Activated CD4-positive, alpha-beta T cell treated with anti-CD3 and anti-CD28 coated beads for 36 hours (primary cell): ENCODE measurements at regions of chr17 and their contacts with region 1.

Region 1: DNA sequence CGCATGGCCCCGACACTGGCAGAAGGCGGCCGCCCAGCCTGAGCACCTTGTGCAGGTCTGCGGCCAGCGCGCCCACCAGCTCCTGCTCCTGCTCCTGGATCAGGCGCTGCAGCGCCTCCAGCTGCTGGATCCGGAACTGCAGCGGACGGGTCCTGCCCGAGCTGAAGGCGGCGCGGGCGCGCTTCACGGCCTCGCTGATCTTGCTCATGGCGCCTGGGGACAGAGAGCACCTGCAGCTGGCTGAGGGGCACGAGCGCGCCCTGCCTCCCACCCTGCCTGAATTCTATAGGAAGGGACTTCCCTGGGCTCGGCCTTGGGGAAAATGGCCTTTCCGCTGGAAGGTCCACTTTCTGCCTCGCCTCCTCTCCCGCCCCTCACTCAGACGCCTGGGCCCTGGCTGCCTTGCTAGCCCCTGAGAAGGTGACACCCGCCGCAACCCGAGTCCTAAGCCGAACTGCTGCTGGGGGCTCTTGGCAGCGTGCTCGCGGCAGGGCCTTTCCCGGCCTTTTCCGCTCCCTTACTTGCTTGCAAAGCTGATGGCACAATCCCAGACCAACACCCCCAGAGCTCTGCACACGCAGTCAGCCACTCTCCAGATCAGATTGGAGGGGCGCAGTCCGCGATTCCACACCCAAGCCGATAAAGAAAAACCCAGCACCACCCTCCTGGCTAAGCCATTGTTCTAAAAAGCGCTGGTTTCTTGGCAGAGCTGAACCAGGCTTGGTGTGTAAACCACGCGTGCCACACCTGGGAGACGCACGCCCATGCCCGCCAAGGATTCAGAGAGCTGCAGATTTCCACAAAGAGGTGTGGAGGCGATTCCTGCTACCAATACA is 3.0 kb downstream of the ALDH3A1 start:
- DNase-seq: peak; percentile 95
- ATAC-seq: peak; percentile 95
- H3K4me3 Mint-ChIP-seq: peak overlapping the region; percentile 62
- H3K27ac Mint-ChIP-seq: no peak overlapping the region
- H3K4me1 Mint-ChIP-seq: peaks cover 10% of the 10 kb centered on the region
- H3K27me3 Mint-ChIP-seq: no peaks in the 10 kb centered on the region

Region 2: DNA sequence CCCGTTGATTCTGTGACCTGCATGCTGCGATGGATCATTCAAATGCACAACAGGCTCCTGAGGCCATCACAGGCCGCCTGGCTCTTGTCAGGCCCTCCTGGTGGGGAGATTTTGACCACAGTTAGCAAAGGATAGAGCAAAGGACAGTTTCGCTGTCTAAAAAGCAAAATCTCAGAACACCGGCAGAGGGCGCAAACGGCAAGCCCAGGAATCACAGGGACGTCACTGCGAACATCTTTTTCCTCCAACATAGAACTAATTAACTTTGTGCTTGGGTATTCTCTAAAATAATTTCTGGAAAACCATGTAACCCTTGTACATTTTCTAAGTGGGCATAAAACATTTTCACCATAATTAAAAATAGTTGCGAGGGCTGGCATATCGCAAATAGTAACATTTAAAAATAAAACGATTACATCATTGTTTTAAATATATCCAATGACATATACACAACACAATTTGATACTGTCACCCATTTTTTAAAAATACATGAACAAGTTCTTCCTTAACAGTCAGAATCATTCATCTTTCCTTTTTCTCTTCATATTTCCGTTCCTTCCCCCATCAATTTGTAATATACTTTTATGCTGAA is 231.1 kb before region 1 on chr17:
- CTCF ChIA-PET with region 1: interaction called, 11 read pairs
- POLR2A ChIA-PET with region 1: no interaction called
- intact Hi-C with region 1: no loop called
- DNase-seq: peak; percentile 82
- ATAC-seq: peak; percentile 69
- H3K4me3 Mint-ChIP-seq: no peak overlapping the region
- H3K27ac Mint-ChIP-seq: no peak overlapping the region
- H3K4me1 Mint-ChIP-seq: no peaks in the 10 kb centered on the region
- H3K27me3 Mint-ChIP-seq: peaks cover 3% of the 10 kb centered on the region

Region 3: GRCh38 chr17:19578545-19578944 is 166.6 kb before region 1 on chr17:
- CTCF ChIA-PET with region 1: no interaction called
- POLR2A ChIA-PET with region 1: no interaction called
- intact Hi-C with region 1: no loop called
- DNase-seq: no peak
- ATAC-seq: no peak
- H3K4me3 Mint-ChIP-seq: no peak overlapping the region
- H3K27ac Mint-ChIP-seq: no peak overlapping the region
- H3K4me1 Mint-ChIP-seq: peaks cover 2% of the 10 kb centered on the region
- H3K27me3 Mint-ChIP-seq: peaks cover 18% of the 10 kb centered on the region

Region 4: GRCh38 chr17:19648475-19649406 is 96.4 kb before region 1 on chr17 and contains the start of gene ALDH3A2:
- CTCF ChIA-PET with region 1: interaction called, 26 read pairs
- POLR2A ChIA-PET with region 1: no interaction called
- intact Hi-C with region 1: loop called (anchors 5 kb)
- DNase-seq: peak; percentile 97
- ATAC-seq: peak; percentile 94
- H3K4me3 Mint-ChIP-seq: peak within 1 kb of the TSS; percentile 79
- H3K27ac Mint-ChIP-seq: peak within 1 kb of the TSS; percentile 87
- H3K4me1 Mint-ChIP-seq: peaks cover 38% of the 10 kb centered on the region
- H3K27me3 Mint-ChIP-seq: peaks cover 1% of the 10 kb centered on the region
- total RNA-seq, gene ALDH3A2: 18.5 to 23.9 TPM

Region 5: DNA sequence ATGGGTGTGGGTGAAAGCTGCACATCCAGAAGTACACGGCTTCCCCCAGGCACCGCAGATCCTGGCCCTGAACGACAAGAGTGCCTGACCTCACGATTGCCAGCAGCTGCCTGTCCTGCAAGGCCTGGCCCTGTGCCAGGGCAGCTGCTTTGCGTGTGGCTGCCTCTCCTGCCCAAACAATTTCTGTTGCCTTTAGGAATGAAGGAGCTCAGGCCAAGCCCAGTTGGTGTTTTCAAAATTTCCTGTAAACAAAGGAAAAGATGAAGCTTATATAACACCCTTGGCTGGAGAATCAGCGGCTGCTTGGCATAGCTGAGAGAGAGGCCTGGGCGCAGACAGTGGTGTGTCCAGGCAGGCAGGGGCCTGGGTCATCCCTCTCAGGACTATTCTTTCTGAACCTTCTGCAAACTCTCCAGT is 17.1 kb before region 1 on chr17:
- CTCF ChIA-PET with region 1: interaction called, 16 read pairs
- POLR2A ChIA-PET with region 1: no interaction called
- intact Hi-C with region 1: no loop called
- DNase-seq: no peak
- ATAC-seq: no peak
- H3K4me3 Mint-ChIP-seq: no peak overlapping the region
- H3K27ac Mint-ChIP-seq: no peak overlapping the region
- H3K4me1 Mint-ChIP-seq: peaks cover 19% of the 10 kb centered on the region
- H3K27me3 Mint-ChIP-seq: no peaks in the 10 kb centered on the region

Region 6: GRCh38 chr17:19733953-19734526 is 11.1 kb before region 1 on chr17:
- CTCF ChIA-PET with region 1: interaction called, 16 read pairs
- POLR2A ChIA-PET with region 1: no interaction called
- intact Hi-C with region 1: no loop called
- DNase-seq: no peak
- ATAC-seq: no peak
- H3K4me3 Mint-ChIP-seq: no peak overlapping the region
- H3K27ac Mint-ChIP-seq: no peak overlapping the region
- H3K4me1 Mint-ChIP-seq: no peaks in the 10 kb centered on the region
- H3K27me3 Mint-ChIP-seq: no peaks in the 10 kb centered on the region

Region 7: DNA sequence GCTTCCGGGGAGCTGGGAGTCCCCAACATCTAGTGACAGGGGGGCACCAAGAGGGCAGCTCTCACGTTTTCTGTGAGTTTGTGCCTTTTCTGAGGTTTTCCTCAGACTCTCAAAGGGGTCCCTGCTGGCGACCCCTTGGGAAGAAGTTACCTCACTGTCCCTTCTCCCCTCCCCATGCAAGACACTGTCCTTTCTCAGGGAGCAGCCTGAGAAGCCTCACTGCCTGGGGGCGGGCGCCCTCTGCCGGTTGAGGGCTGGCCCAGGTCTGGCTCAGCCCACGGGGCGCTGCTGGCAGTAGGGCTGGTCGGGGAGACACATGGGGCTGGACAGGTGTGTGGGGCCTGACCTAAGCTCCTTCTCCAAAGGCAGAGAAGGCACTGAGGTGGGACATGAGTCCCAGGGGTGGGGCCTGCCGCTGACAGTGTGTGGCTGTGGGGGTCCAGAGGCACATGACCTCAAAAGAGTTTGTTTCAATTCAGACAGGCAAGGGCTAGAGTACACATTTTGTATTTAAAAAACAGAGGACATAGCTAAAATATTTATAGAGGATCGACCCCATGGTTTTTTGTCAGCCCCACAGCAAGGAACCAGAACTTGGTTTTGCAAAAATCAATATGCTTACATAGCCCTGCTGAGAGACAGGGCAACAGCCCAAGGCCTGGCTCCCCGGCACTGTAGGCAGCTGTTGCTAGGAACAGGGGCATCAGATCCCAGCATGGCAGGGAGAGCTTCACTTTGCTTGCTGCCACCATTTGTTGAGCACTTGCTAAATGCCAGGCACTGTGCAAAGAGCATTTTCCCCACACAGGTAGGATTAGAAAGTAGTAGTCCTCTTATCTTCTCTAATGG is 21.5 kb after region 1 on chr17:
- CTCF ChIA-PET with region 1: interaction called, 37 read pairs
- POLR2A ChIA-PET with region 1: no interaction called
- intact Hi-C with region 1: no loop called
- DNase-seq: peak; percentile 89
- ATAC-seq: peak; percentile 80
- H3K4me3 Mint-ChIP-seq: no peak overlapping the region
- H3K27ac Mint-ChIP-seq: peak overlapping the region; percentile 72
- H3K4me1 Mint-ChIP-seq: peaks cover 46% of the 10 kb centered on the region
- H3K27me3 Mint-ChIP-seq: no peaks in the 10 kb centered on the region

Region 8: GRCh38 chr17:19805006-19805405 is 59.9 kb after region 1 on chr17:
- CTCF ChIA-PET with region 1: no interaction called
- POLR2A ChIA-PET with region 1: no interaction called
- intact Hi-C with region 1: loop called in 1 of 2 experiments (anchors 10 kb)
- DNase-seq: no peak
- ATAC-seq: no peak
- H3K4me3 Mint-ChIP-seq: no peak overlapping the region
- H3K27ac Mint-ChIP-seq: no peak overlapping the region
- H3K4me1 Mint-ChIP-seq: peaks cover 27% of the 10 kb centered on the region
- H3K27me3 Mint-ChIP-seq: no peaks in the 10 kb centered on the region

Region 9: DNA sequence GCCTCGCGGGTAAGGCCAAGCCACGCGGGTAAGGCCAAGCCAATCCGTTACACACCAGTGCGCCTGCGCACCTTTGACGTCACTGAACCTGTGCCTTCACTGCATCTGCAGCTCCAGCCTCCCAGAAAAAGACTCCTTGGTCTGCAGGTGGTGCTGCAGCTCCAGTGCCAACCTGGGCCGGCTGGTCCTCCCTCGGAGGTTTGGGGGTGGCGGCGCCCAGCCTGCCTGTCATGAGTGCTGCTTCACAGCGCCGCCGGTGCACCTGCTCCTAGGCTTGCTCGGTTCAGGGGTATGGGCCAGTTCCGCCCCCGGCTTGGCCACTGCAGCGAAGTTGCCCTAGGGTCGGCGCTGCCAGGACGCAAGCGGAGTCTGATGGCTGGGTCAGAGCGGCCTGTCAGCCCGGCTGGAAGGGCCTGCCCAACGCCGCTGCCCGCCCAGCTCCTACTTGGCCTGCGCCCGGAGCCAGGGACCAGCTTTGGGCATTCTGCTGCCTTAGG is 1151.1 kb after region 1 on chr17:
- CTCF ChIA-PET with region 1: no interaction called
- POLR2A ChIA-PET with region 1: no interaction called
- intact Hi-C with region 1: no loop called
- DNase-seq: peak; percentile 50
- ATAC-seq: peak; percentile 30
- H3K4me3 Mint-ChIP-seq: no peak overlapping the region
- H3K27ac Mint-ChIP-seq: no peak overlapping the region
- H3K4me1 Mint-ChIP-seq: no peaks in the 10 kb centered on the region
- H3K27me3 Mint-ChIP-seq: peaks cover 2% of the 10 kb centered on the region